ENCODE measurements at regions of chr3 and their contacts with region 1.

Region 1: DNA sequence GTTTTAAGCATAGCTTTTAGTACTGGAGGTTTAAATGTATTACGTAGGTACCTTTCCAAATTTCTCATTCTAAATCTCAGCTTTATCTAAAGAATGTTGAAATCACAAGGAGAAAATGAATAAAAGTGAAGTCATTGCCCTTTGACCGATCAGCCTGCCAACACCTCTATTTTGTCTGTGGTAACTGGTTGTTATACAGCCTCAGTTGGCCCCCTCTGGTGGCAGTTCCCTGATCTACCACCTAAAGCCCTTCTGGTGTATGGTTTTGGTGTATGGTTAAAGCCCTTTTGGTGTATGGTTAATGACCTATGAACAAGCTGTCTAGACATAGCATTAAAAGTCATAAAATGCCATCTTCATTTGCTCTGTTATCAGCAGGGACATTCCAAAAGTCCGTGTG is 378.2 kb upstream of the AZI2 start:
- DNase-seq: peak; percentile 38
- ATAC-seq: no peak
- H3K4me3 Mint-ChIP-seq: no peak overlapping the region
- H3K27ac Mint-ChIP-seq: no peak overlapping the region
- H3K4me1 Mint-ChIP-seq: no peaks in the 10 kb centered on the region
- H3K27me3 Mint-ChIP-seq: peaks cover 2% of the 10 kb centered on the region

Region 2: DNA sequence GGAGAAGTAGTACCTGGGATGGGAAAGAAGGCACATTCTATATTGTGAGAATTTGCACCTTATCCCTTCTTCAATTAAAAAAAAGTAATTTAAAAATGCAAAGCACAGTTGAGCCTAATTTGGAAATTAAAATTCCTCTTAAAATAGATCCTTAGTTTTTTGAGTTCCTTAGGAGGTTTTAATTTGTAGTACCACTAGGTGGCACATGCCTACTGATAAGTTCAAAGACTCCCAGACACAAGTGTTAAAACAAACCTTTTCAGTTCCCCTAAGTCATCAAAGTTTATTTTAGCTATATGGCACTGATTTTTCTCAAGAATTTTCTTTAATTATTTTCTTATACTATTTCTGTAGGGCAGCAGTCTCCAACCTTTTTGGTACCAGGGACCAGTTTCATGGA is 250.6 kb before region 1 on chr3:
- CTCF ChIA-PET with region 1: no interaction called
- POLR2A ChIA-PET with region 1: no interaction called
- intact Hi-C with region 1: loop called in 1 of 2 experiments (anchors 10 kb)
- DNase-seq: no peak
- ATAC-seq: no peak
- H3K4me3 Mint-ChIP-seq: no peak overlapping the region
- H3K27ac Mint-ChIP-seq: no peak overlapping the region
- H3K4me1 Mint-ChIP-seq: no peaks in the 10 kb centered on the region
- H3K27me3 Mint-ChIP-seq: no peaks in the 10 kb centered on the region

Measured in activated CD4-positive, alpha-beta T cell treated with anti-CD3 and anti-CD28 coated beads for 36 hours (primary cell).